CD4-positive, alpha-beta memory T cell (primary cell): ENCODE measurements at regions of chr4 and their contacts with region 1.

Region 1: DNA sequence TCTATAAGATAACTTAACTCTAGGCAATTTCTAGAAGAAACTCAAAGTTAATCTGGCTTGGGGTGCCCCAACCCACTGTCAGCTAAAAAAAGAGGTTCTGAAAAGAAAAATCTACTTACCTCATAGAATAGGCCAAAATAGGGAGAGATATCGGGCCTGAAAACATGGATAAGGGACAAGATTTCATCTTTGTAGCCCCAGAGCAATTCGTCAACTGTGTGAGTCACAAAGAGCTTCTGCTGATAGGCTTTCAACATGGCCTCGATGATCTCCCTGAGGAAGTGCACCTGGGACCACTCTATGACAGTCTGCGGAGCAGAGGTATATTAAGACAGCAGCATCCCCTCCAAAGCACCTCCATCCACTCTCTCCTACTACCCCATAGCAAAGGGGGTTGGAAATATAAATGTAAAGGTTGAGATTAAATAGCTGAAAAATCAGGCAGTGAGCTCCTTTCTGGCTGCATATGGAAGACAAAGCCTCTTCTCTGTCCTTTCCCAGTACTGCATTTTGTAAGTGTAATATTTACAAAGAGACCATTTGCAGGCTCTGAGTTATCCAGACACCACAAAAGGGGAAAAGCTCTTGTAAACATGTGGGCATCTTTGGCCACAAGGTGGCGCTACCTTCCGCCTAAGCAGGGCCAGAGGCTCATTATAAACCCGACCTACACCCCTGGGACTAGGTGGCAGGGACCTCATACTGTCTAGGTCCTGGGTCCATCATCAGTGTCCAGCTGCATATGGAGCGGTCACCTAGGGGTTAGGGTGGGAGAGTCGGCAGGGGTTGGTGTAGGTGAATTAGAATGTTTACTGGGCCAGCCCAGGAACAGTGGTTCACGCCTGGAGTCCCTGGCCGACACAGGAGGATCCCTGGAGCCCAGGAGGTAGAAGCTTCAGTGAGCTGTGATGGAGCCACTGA is 31.5 kb upstream of the NUP54 start:
- DNase-seq: peak; percentile 66 to 76 (median 73)
- H3K4me3 ChIP-seq: no peak overlapping the region
- H3K4me3 Mint-ChIP-seq: no peak overlapping the region
- H3K27ac ChIP-seq: no peak overlapping the region
- H3K27ac Mint-ChIP-seq: no peak overlapping the region
- H3K4me1 ChIP-seq: no peaks in the 10 kb centered on the region
- H3K4me1 Mint-ChIP-seq: peaks cover 0 to 3% (median 0%) of the 10 kb centered on the region in 4 donors
- H3K27me3 ChIP-seq: no peaks in the 10 kb centered on the region
- H3K27me3 Mint-ChIP-seq: no peaks in the 10 kb centered on the region

Region 2: GRCh38 chr4:76028350-76028765 is 151.3 kb before region 1 on chr4:
- CTCF ChIA-PET with region 1: no interaction called
- POLR2A ChIA-PET with region 1: no interaction called
- intact Hi-C with region 1: no loop called
- DNase-seq: peak in 4 of 5 donors; percentile 27 to 40 (median 33)
- H3K4me3 ChIP-seq: peak overlapping the region in 1 of 2 donors; percentile 19
- H3K4me3 Mint-ChIP-seq: peak overlapping the region; percentile 39 to 78 (median 69)
- H3K27ac ChIP-seq: no peak overlapping the region
- H3K27ac Mint-ChIP-seq: peak overlapping the region in 5 of 7 donors; percentile 24 to 75 (median 45)
- H3K4me1 ChIP-seq: peaks cover 22% of the 10 kb centered on the region
- H3K4me1 Mint-ChIP-seq: peaks cover 15 to 26% (median 23%) of the 10 kb centered on the region in 4 donors
- H3K27me3 ChIP-seq: no peaks in the 10 kb centered on the region
- H3K27me3 Mint-ChIP-seq: no peaks in the 10 kb centered on the region

Region 3: DNA sequence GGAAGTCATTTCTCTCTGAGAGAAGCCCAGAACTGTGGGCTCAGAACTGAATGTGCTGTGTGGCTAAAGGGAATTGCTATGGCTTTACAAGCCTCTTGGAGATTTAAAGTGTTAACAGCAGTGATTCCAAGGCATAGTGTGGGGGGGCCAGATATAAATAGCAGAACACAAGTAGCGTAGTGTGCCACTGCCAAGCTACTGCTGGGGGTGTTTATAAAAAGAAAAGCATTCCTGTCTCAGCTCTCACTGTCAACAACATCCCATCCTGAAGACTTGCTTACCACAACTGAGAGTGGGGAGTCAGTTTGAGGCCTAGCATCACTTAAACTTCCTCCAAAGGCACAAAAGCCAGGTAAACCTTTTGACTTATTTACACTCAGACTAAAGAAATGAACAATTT is 105.2 kb before region 1 on chr4 and contains the start of gene ART3:
- CTCF ChIA-PET with region 1: no interaction called
- POLR2A ChIA-PET with region 1: no interaction called
- intact Hi-C with region 1: no loop called
- DNase-seq: no peak
- H3K4me3 ChIP-seq: no peak within 1 kb of the TSS
- H3K4me3 Mint-ChIP-seq: no peak within 1 kb of the TSS
- H3K27ac ChIP-seq: no peak within 1 kb of the TSS
- H3K27ac Mint-ChIP-seq: no peak within 1 kb of the TSS
- H3K4me1 ChIP-seq: no peaks in the 10 kb centered on the region
- H3K4me1 Mint-ChIP-seq: no peaks in the 10 kb centered on the region
- H3K27me3 ChIP-seq: no peaks in the 10 kb centered on the region
- H3K27me3 Mint-ChIP-seq: peaks cover 3 to 4% of the 10 kb centered on the region in 2 donors
- total RNA-seq, gene ART3: not detected

Region 4: DNA sequence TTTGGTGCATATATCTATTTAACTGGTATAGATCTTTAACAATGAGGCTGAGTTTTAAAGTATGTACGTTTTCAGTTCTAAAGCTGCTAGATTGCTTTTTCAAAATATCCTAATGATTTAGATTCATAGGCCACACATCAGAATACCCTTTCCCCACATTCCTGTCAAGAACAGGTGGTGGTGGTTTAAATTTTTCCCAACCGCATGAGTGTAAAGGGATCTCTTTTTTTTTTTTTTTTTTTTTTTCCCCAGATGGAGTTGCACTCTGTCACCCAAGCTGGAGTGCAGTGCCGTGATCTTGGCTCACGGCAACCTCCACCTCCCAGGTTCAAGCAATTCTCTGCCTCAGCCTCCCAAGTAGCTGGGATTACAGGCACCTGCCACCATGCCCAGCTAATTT is 59.5 kb before region 1 on chr4:
- CTCF ChIA-PET with region 1: no interaction called
- POLR2A ChIA-PET with region 1: no interaction called
- intact Hi-C with region 1: no loop called
- DNase-seq: no peak
- H3K4me3 ChIP-seq: no peak overlapping the region
- H3K4me3 Mint-ChIP-seq: no peak overlapping the region
- H3K27ac ChIP-seq: no peak overlapping the region
- H3K27ac Mint-ChIP-seq: no peak overlapping the region
- H3K4me1 ChIP-seq: no peaks in the 10 kb centered on the region
- H3K4me1 Mint-ChIP-seq: peaks cover 0 to 2% (median 0%) of the 10 kb centered on the region in 4 donors
- H3K27me3 ChIP-seq: no peaks in the 10 kb centered on the region
- H3K27me3 Mint-ChIP-seq: no peaks in the 10 kb centered on the region

Region 5: DNA sequence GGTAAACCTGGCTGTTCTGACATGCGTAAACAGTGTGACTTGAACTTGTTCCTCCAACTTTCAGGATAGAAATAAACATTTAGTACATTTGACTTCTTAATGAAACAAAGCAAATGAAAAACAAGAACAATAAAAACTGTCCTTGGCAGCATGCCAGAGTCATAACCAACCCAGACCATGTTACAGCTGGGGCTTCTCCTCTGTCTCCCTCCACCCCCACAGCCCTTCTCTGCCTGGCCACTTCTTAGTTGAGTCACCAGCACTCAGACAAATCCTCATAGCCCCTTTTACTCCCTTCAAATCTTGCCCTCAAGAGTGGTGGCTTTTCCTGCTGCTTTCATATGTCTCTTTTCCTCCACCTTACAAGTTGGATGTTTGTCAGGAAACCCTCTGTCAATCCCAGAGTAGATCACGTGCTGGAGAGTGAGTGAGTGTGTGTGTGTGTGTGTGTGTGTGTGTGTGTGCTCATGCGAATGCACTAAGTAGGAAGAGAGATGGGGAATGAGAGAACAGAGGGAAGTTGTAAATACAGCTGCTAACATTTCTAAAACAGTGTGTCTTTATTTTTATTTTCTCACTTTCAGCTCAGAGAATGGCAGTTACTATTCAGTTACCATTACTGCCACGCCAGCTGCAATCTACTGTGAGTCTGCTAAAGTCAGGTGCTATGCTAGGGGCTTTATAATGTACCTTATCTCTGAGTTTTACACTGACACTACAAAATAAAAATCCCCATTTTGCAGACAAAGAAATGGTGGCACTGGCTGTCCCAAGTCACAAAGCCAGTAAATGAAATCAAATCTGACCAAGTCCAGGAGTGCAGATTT is 19.0 kb after region 1 on chr4:
- CTCF ChIA-PET with region 1: interaction called, 14 read pairs
- POLR2A ChIA-PET with region 1: no interaction called
- intact Hi-C with region 1: no loop called
- DNase-seq: peak in 1 of 5 donors; percentile 8
- H3K4me3 ChIP-seq: no peak overlapping the region
- H3K4me3 Mint-ChIP-seq: peak overlapping the region in 5 of 8 donors; percentile 3 to 39 (median 32)
- H3K27ac ChIP-seq: no peak overlapping the region
- H3K27ac Mint-ChIP-seq: peak overlapping the region in 6 of 7 donors; percentile 4 to 85 (median 78)
- H3K4me1 ChIP-seq: peaks cover 21% of the 10 kb centered on the region
- H3K4me1 Mint-ChIP-seq: peaks cover 34 to 49% (median 42%) of the 10 kb centered on the region in 4 donors
- H3K27me3 ChIP-seq: no peaks in the 10 kb centered on the region
- H3K27me3 Mint-ChIP-seq: no peaks in the 10 kb centered on the region

Region 6: DNA sequence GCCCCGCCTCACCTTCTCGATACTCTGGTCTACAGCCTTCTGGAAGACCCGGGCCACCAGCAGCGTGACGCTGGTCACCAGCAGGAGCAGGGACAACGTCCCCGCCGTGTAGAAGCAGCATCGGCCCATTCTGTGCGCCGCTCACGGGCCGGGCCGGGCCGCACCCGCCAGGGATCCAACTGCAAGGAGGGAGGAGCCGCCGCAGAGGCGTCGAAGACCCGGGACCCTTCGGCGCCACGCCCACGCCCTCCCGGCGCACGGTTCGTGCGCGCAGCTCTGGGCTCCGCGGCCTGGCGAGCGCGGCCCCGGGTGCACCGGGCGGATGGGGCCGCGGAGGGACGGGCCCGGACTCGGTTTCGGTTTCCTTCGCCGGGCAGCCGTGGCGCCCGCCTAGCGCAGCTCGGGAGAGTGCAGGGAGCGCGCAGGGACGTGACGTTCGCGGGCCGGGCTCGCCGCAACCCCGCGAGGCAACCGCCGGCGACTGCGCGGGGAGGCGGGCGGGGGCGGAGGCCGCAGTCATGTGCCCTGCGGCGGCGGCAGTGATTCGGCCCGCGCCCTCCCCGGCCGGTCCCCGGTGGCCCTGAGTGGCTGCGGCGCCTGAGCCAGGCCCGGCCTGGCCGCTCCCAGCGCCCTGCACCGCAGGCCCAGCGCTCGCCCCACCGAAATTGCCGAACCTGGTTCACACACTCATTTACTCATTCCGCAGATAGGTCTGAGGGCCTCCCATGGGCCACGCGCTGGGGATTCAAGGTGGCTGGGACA is 33.9 kb after region 1 on chr4 and contains the start of gene SCARB2:
- CTCF ChIA-PET with region 1: interaction called, 31 read pairs
- POLR2A ChIA-PET with region 1: interaction called, 7 read pairs
- intact Hi-C with region 1: loop called (anchors 2 kb)
- DNase-seq: peak; percentile 79 to 88 (median 83)
- H3K4me3 ChIP-seq: peak within 1 kb of the TSS; percentile 77 to 90
- H3K4me3 Mint-ChIP-seq: peak within 1 kb of the TSS; percentile 89 to 97 (median 96)
- H3K27ac ChIP-seq: peak within 1 kb of the TSS; percentile 84
- H3K27ac Mint-ChIP-seq: peak within 1 kb of the TSS; percentile 92 to 98 (median 98)
- H3K4me1 ChIP-seq: peaks cover 43% of the 10 kb centered on the region
- H3K4me1 Mint-ChIP-seq: peaks cover 39 to 72% (median 48%) of the 10 kb centered on the region in 4 donors
- H3K27me3 ChIP-seq: no peaks in the 10 kb centered on the region
- H3K27me3 Mint-ChIP-seq: no peaks in the 10 kb centered on the region
- total RNA-seq, gene SCARB2: 23.3 to 23.5 TPM

Region 7: DNA sequence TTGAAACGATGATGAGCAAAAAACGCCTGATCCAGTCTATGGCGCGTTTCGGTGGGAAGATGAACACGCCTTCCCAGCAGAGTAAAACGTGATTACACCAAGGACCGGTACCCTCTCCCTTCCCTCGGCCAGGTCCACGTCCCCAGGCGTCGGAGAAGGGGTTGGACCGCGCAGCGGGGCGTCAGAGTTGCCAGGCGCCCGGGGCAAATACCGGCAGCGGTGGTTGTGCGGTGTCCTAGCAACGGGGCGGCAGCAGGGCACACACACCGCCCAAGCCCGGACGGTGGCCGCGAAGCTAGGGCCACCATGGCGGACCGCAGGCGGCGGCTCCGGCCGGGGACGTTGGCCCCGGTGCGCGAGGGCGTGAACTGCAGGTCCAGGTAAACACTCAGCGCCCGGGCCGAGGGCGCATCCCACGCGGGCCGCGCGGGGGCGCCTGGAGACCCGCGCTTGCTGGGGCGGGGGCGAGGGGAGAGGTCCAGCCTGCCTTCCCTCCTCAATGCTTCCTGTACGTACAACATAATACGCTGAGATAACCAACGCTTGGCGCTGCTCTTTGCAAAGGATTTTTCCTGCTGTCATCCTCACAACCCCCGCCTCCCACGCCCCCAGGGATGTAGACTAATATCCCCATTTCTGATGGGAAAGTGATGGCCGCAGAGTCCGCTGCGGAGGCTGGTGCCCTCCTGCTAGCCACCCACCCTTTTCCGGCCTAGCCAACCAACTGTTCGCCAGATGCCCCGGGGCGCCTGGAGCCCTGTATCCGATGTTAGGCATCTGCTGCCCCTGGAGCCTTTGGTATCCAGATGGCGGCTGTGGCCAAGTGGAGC is 72.0 kb after region 1 on chr4 and contains the start of gene FAM47E:
- CTCF ChIA-PET with region 1: interaction called, 23 read pairs
- POLR2A ChIA-PET with region 1: no interaction called
- intact Hi-C with region 1: loop called (anchors 2 kb)
- DNase-seq: peak; percentile 33 to 41 (median 34)
- H3K4me3 ChIP-seq: peak within 1 kb of the TSS in 1 of 2 donors; percentile 47
- H3K4me3 Mint-ChIP-seq: peak within 1 kb of the TSS; percentile 71 to 89 (median 84)
- H3K27ac ChIP-seq: no peak within 1 kb of the TSS
- H3K27ac Mint-ChIP-seq: peak within 1 kb of the TSS in 3 of 7 donors; percentile 37 to 69 (median 44)
- H3K4me1 ChIP-seq: peaks cover 6% of the 10 kb centered on the region
- H3K4me1 Mint-ChIP-seq: peaks cover 3 to 8% (median 6%) of the 10 kb centered on the region in 4 donors
- H3K27me3 ChIP-seq: peaks cover 43% of the 10 kb centered on the region
- H3K27me3 Mint-ChIP-seq: peaks cover 48 to 51% of the 10 kb centered on the region in 2 donors
- total RNA-seq, gene FAM47E: 0.64 TPM in 1 of 2 experiments, not detected in the other

Region 8: GRCh38 chr4:76354517-76355473 is 175.1 kb after region 1 on chr4:
- CTCF ChIA-PET with region 1: interaction called, 12 read pairs
- POLR2A ChIA-PET with region 1: no interaction called
- intact Hi-C with region 1: no loop called
- DNase-seq: peak in 4 of 5 donors; percentile 17 to 35 (median 26)
- H3K4me3 ChIP-seq: no peak overlapping the region
- H3K4me3 Mint-ChIP-seq: peak overlapping the region in 7 of 8 donors; percentile 7 to 77 (median 72)
- H3K27ac ChIP-seq: no peak overlapping the region
- H3K27ac Mint-ChIP-seq: peak overlapping the region in 3 of 7 donors; percentile 0 to 42 (median 2)
- H3K4me1 ChIP-seq: peaks cover 17% of the 10 kb centered on the region
- H3K4me1 Mint-ChIP-seq: peaks cover 9 to 17% (median 13%) of the 10 kb centered on the region in 4 donors
- H3K27me3 ChIP-seq: no peaks in the 10 kb centered on the region
- H3K27me3 Mint-ChIP-seq: peaks cover 2 to 4% of the 10 kb centered on the region in 2 donors

Region 9: DNA sequence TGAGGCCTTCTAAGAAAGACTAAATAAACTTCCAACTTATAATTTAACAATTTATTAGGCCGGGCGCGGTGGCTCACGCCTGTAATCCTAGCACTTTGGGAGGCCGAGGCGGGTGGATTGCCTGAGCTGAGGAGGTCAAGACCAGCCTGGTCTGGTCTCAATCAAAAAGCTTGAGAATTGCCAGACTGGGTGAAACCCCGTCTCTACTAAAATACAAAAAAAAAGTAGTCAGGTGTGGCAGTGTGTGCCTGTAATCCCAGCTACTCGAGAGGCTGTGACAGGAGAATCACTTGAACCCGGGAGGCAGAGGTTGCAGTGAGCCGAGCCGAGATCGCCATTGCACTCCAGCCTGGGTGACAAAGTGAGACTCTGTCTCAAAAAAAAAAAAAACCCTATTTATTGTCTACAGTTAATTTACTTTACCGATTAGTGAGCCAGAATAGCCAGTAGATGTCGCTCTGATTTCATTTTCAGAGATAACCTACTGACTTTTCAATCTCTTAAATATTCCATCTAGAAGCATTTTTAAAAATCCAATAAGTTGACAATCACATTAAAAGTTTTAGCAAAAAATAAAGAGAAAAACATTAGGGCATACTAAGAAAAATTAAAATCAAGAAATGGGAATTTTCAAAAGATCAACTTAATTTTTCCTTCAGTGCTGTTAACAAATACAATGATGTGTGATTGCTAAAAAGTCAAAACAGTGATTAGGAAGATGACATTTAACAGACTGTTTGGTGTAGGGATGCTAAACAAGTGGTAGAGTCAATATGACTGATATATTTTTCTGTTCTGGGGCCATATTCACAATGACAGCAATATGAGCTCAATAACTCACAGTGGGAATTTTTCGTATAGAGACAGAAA is 251.1 kb after region 1 on chr4:
- CTCF ChIA-PET with region 1: interaction called, 10 read pairs
- POLR2A ChIA-PET with region 1: no interaction called
- intact Hi-C with region 1: no loop called
- DNase-seq: peak in 4 of 5 donors; percentile 15 to 28 (median 18)
- H3K4me3 ChIP-seq: no peak overlapping the region
- H3K4me3 Mint-ChIP-seq: no peak overlapping the region
- H3K27ac ChIP-seq: no peak overlapping the region
- H3K27ac Mint-ChIP-seq: no peak overlapping the region
- H3K4me1 ChIP-seq: no peaks in the 10 kb centered on the region
- H3K4me1 Mint-ChIP-seq: peaks cover 0 to 2% (median under 1%) of the 10 kb centered on the region in 4 donors
- H3K27me3 ChIP-seq: no peaks in the 10 kb centered on the region
- H3K27me3 Mint-ChIP-seq: peaks cover 7 to 8% of the 10 kb centered on the region in 2 donors

Region 10: DNA sequence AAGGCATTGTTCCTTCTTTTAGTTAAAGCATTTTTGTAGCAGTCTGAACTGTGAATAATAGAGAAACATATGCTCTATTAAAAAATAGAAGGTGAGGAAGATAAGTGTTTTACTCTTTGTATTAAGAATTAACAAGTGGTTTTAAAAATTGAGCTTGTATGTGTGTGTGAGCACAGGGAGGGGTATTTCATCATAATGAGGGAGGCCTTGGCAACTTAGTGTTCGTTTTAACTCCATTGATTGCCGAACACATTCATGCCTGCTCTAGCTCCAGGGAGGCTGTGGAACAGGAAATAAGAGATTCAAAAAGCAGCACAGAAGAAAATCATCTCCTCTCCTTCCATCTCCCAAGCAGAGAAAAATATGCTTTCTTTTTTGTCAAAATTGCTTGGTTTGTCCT is 270.2 kb after region 1 on chr4:
- CTCF ChIA-PET with region 1: no interaction called
- POLR2A ChIA-PET with region 1: no interaction called
- intact Hi-C with region 1: no loop called
- DNase-seq: no peak
- H3K4me3 ChIP-seq: no peak overlapping the region
- H3K4me3 Mint-ChIP-seq: no peak overlapping the region
- H3K27ac ChIP-seq: no peak overlapping the region
- H3K27ac Mint-ChIP-seq: no peak overlapping the region
- H3K4me1 ChIP-seq: no peaks in the 10 kb centered on the region
- H3K4me1 Mint-ChIP-seq: no peaks in the 10 kb centered on the region
- H3K27me3 ChIP-seq: no peaks in the 10 kb centered on the region
- H3K27me3 Mint-ChIP-seq: peaks cover 6 to 7% of the 10 kb centered on the region in 2 donors